HepG2 (cell line): ENCODE measurements at regions of chr4 and their contacts with region 1.

Region 1: GRCh38 chr4:21765810-21766407 is 182.7 kb downstream of the KCNIP4 start:
- DNase-seq: peak; percentile 25
- ATAC-seq: peak; percentile 85
- H3K4me3 ChIP-seq: no peak overlapping the region
- H3K27ac ChIP-seq: no peak overlapping the region
- H3K4me1 ChIP-seq: no peaks in the 10 kb centered on the region
- H3K27me3 ChIP-seq: no peaks in the 10 kb centered on the region
- CTCF ChIP-seq: peak; percentile 78
- EP300 ChIP-seq: no peak
- POLR2A ChIP-seq: no peak
- RAD21 ChIP-seq: no peak

Region 2: DNA sequence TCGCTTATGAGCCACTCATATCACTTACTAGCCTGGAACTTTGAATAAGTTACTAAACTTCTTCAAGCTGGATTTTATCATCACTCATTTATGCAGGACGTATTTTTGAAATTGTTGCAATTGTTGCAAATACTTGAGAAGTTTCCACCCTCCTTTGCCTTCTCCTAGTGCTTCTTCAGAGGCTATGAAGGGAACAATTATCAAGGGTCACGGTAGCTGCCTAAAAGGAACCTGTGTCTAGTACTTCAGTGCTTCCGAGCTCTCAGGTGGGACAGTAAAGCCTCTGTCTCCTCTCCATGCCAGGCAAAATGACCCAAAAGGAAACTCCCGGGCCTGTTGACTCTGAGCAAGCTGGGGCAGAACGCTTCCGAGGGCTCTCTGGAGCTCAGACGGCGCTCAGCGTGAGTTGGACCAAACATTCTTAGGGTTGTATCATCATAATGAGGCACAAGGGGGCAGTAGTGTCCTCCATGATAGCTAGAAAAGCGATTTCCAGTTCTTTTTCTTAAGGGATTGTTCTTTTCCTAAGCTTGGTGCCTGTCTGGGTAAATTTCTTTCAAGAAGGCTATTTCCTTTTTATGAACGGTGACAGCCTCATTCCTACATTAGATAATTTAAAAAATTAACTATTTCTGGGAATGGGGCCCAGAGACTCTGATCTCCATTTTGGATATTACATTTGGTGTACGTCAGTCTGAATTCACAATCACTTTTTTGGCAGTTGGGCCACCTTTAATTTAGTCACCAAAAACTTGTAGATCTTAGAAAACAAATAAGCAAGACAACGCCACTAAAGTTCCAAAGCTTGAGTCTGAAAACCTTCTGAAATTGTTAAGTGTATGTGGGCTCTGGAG is 992.5 kb before region 1 on chr4:
- CTCF ChIA-PET with region 1: interaction called, 11 read pairs
- POLR2A ChIA-PET with region 1: no interaction called
- in situ Hi-C with region 1: loop called (anchors 25 kb)
- intact Hi-C with region 1: loop called (anchors 1 kb)
- DNase-seq: peak; percentile 40
- ATAC-seq: peak; percentile 98
- H3K4me3 ChIP-seq: no peak overlapping the region
- H3K27ac ChIP-seq: no peak overlapping the region
- H3K4me1 ChIP-seq: no peaks in the 10 kb centered on the region
- H3K27me3 ChIP-seq: peaks cover 0 to 2% of the 10 kb centered on the region in 2 experiments; a peak in 1 of 5 replicates
- CTCF ChIP-seq: peak; percentile 78
- EP300 ChIP-seq: no peak
- POLR2A ChIP-seq: no peak
- RAD21 ChIP-seq: no peak

Region 3: DNA sequence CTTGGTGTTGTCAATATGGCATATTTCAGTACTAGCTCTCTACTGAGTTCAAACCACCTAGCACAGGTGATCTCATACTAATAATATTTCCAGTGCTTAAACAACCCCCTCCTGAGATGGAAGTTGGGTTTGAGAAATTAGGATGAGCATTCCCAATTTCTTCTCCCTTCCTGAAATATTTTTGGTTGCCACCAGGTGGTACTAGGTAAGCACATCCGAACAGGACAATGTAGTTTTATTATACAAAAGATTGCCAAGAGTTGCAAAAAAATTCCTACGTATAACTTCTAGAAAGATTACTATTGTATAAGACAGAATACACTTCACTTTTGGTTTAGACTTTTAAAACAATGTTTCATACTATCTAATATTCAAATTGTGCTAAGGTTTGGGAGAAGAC is 581.1 kb before region 1 on chr4:
- CTCF ChIA-PET with region 1: no interaction called
- POLR2A ChIA-PET with region 1: no interaction called
- in situ Hi-C with region 1: no loop called
- intact Hi-C with region 1: loop called (anchors 10 kb)
- DNase-seq: no peak
- ATAC-seq: no peak
- H3K4me3 ChIP-seq: no peak overlapping the region
- H3K27ac ChIP-seq: no peak overlapping the region
- H3K4me1 ChIP-seq: no peaks in the 10 kb centered on the region
- H3K27me3 ChIP-seq: no peaks in the 10 kb centered on the region
- CTCF ChIP-seq: no peak
- EP300 ChIP-seq: no peak
- POLR2A ChIP-seq: no peak
- RAD21 ChIP-seq: no peak

Region 4: GRCh38 chr4:21512353-21512752 is 253.6 kb before region 1 on chr4:
- CTCF ChIA-PET with region 1: interaction called, 11 read pairs
- POLR2A ChIA-PET with region 1: no interaction called
- in situ Hi-C with region 1: loop called (anchors 5 kb)
- intact Hi-C with region 1: loop called (anchors 1 kb)
- DNase-seq: no peak
- ATAC-seq: no peak
- H3K4me3 ChIP-seq: no peak overlapping the region
- H3K27ac ChIP-seq: no peak overlapping the region
- H3K4me1 ChIP-seq: no peaks in the 10 kb centered on the region
- H3K27me3 ChIP-seq: no peaks in the 10 kb centered on the region
- CTCF ChIP-seq: peak; percentile 32; the same call in 1 of the 2 replicates
- EP300 ChIP-seq: no peak
- POLR2A ChIP-seq: no peak
- RAD21 ChIP-seq: no peak

Region 5: DNA sequence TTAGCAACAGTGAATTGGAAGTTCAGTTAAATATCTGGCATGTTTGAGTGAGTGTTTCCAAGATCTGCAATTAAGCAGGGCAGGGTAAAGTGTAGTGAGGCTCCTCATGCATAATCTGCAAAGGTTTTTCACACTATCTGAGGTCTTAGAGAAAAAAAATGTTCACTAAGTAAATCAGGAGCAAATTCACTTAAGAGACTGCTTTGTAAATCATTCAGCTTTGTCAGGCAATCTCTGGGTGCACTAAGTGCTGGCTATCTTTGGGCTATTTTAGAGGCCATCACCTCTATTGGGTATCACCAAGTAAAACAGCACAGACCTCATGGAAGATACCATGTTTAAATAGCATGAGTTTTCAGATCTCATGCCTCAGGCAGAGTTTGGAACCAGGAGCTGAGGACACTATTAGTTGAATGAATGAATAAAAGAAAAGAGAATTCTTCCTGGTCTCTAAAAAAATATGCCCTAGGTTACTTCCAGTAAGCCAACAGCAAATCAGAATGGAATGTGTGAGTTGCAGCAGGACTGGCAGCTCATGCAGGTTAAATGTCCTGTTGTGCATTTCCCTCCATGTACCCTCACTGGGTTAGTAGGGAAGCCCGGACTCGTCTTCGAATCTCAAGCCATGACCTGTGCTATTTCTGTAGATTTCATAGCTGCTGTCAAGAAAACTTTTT is 12.7 kb before region 1 on chr4:
- CTCF ChIA-PET with region 1: no interaction called
- POLR2A ChIA-PET with region 1: no interaction called
- in situ Hi-C with region 1: no loop called
- intact Hi-C with region 1: no loop called
- DNase-seq: no peak
- ATAC-seq: no peak
- H3K4me3 ChIP-seq: no peak overlapping the region
- H3K27ac ChIP-seq: no peak overlapping the region
- H3K4me1 ChIP-seq: no peaks in the 10 kb centered on the region
- H3K27me3 ChIP-seq: no peaks in the 10 kb centered on the region
- CTCF ChIP-seq: no peak
- EP300 ChIP-seq: no peak
- POLR2A ChIP-seq: no peak
- RAD21 ChIP-seq: no peak

Region 6: GRCh38 chr4:21921526-21922180 is 155.7 kb after region 1 on chr4:
- CTCF ChIA-PET with region 1: no interaction called
- POLR2A ChIA-PET with region 1: no interaction called
- in situ Hi-C with region 1: no loop called
- intact Hi-C with region 1: no loop called
- DNase-seq: no peak
- ATAC-seq: no peak
- H3K4me3 ChIP-seq: no peak overlapping the region
- H3K27ac ChIP-seq: no peak overlapping the region
- H3K4me1 ChIP-seq: no peaks in the 10 kb centered on the region
- H3K27me3 ChIP-seq: no peaks in the 10 kb centered on the region
- CTCF ChIP-seq: no peak
- EP300 ChIP-seq: no peak
- POLR2A ChIP-seq: no peak
- RAD21 ChIP-seq: no peak

Region 7: DNA sequence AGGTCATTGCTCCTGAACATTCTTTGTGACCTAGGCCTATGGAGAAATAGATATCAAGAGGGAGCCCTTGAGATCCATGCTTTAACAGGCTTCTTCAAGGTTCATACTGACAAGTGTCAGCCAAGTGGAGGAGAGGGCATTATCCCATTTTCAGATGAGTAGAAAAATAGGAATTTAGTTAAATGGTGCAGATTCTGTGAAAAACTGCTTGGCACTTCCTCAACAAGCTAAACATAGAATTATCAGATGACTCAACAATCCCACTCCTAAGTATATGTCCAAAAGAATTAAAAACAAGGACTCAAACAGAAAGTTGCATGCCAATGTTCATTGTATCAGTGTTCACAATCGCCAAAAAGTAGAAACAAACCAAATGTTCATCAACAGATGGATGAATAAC is 226.4 kb after region 1 on chr4:
- CTCF ChIA-PET with region 1: no interaction called
- POLR2A ChIA-PET with region 1: no interaction called
- in situ Hi-C with region 1: no loop called
- intact Hi-C with region 1: no loop called
- DNase-seq: no peak
- ATAC-seq: no peak
- H3K4me3 ChIP-seq: no peak overlapping the region
- H3K27ac ChIP-seq: no peak overlapping the region
- H3K4me1 ChIP-seq: no peaks in the 10 kb centered on the region
- H3K27me3 ChIP-seq: no peaks in the 10 kb centered on the region; a peak in 1 of 5 replicates
- CTCF ChIP-seq: no peak
- EP300 ChIP-seq: no peak
- POLR2A ChIP-seq: no peak
- RAD21 ChIP-seq: no peak

Region 8: GRCh38 chr4:22363036-22363435 is 597.1 kb after region 1 on chr4:
- CTCF ChIA-PET with region 1: no interaction called
- POLR2A ChIA-PET with region 1: no interaction called
- in situ Hi-C with region 1: no loop called
- intact Hi-C with region 1: no loop called
- DNase-seq: no peak
- ATAC-seq: no peak
- H3K4me3 ChIP-seq: no peak overlapping the region
- H3K27ac ChIP-seq: no peak overlapping the region
- H3K4me1 ChIP-seq: no peaks in the 10 kb centered on the region
- H3K27me3 ChIP-seq: no peaks in the 10 kb centered on the region
- CTCF ChIP-seq: no peak
- EP300 ChIP-seq: no peak
- POLR2A ChIP-seq: no peak
- RAD21 ChIP-seq: no peak